T-cell (primary cell): ENCODE measurements at regions of chr15 and their contacts with region 1.

Region 1: DNA sequence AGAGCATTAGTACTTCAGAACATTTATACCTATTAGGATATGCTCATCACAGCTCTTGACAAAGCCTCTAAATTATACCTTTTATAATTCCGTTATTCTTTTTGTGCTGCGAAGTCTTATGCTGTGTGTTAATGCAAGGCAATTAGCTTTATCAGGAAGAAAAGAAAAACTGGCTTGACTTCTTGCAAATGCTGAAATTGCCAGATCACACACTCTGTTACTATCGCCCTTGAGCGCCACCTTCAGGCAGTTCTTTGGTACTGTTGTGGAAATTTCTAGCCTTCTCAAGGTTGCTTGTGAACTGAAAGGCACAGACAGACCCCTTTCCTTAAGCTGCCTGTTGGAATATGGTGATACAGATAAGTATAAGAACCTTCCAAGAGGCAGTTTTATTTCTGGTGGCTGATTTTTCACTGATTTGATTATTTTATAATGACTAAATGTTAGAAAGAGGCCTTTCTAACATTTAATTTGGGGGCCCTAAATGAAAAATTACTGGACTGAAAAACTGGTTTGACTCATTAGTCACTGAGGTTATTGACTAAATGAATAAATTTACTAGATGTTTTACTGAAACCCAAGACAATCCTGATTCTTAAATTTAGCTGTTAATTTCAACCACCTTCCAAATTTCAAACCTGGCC is 126.2 kb upstream of the RASGRP1 start:
- DNase-seq: peak; percentile 56 to 94 (median 75)
- ATAC-seq: peak; percentile 25 to 28 (median 27)
- H3K4me3 ChIP-seq: no peak overlapping the region
- H3K4me3 Mint-ChIP-seq: peak overlapping the region in 1 of 3 donors; percentile 48
- H3K27ac ChIP-seq: no peak overlapping the region
- H3K27ac Mint-ChIP-seq: peak overlapping the region; percentile 91 to 98
- H3K4me1 ChIP-seq: peaks cover 53 to 58% of the 10 kb centered on the region in 2 experiments
- H3K4me1 Mint-ChIP-seq: peaks cover 65 to 83% (median 75%) of the 10 kb centered on the region in 3 donors
- H3K27me3 ChIP-seq: no peaks in the 10 kb centered on the region
- H3K27me3 Mint-ChIP-seq: no peaks in the 10 kb centered on the region

Region 2: DNA sequence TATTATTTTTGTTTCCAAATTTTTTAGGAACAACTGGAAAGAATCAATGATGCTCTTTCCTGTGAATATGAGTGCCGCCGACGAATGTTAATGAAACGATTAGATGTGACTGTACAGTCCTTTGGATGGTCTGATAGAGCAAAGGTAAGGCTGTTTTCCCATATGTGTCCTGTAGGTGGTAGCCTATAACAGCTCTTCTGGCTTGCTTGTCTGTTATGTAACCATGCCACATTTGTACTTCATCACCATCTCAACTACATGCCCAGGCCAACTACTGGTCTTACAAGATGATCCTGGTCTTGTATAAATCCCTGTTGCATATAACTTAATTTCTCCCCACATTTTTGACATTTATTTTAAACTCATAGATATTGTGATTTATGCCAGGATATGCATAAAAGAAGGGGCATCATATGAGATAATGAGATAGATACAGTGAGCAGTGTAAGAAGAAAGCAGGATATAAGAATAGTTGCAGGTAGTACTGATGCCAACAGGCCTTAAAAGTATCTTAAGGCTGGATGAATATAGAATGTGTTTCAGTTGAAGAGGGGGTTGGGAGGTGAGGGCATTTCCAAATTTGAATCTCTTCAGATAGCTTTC is 216.6 kb before region 1 on chr15:
- CTCF ChIA-PET with region 1: interaction called, 8 to 17 read pairs
- POLR2A ChIA-PET with region 1: interaction called, 3 read pairs
- DNase-seq: peak in 28 of 35 experiments; percentile 3 to 84 (median 23)
- ATAC-seq: peak; percentile 96 to 99 (median 99)
- H3K4me3 ChIP-seq: no peak overlapping the region
- H3K4me3 Mint-ChIP-seq: no peak overlapping the region
- H3K27ac ChIP-seq: peak overlapping the region; percentile 8
- H3K27ac Mint-ChIP-seq: peak overlapping the region; percentile 79 to 84
- H3K4me1 ChIP-seq: peaks cover 0 to 2% of the 10 kb centered on the region in 2 experiments
- H3K4me1 Mint-ChIP-seq: peaks cover 7 to 19% (median 17%) of the 10 kb centered on the region in 3 donors
- H3K27me3 ChIP-seq: no peaks in the 10 kb centered on the region
- H3K27me3 Mint-ChIP-seq: no peaks in the 10 kb centered on the region

Region 3: DNA sequence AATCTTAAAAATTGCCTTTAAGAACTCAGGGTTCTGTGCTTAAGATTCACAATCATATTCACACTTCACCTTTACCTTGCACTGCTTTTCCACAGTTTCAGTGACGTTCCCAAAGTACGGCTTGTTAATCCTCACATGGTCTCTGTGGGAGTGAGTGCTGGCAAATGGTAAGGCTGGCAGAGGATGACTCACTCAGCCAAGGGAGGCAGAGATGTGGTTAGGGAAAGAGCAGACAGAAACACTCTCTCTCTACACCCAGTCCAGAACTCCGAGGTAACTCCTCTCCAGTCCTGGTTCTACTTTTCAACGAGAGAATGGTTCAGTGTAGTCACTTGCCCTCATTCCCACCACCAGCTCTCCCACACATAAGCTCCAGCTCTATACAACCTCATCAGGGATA is 159.3 kb before region 1 on chr15:
- CTCF ChIA-PET with region 1: interaction called in 1 of 2 experiments, 19 read pairs
- POLR2A ChIA-PET with region 1: no interaction called
- DNase-seq: no peak
- ATAC-seq: no peak
- H3K4me3 ChIP-seq: no peak overlapping the region
- H3K4me3 Mint-ChIP-seq: no peak overlapping the region
- H3K27ac ChIP-seq: no peak overlapping the region
- H3K27ac Mint-ChIP-seq: peak overlapping the region; percentile 91 to 97
- H3K4me1 ChIP-seq: peaks cover 55 to 62% of the 10 kb centered on the region in 2 experiments
- H3K4me1 Mint-ChIP-seq: peaks cover 95 to 98% (median 96%) of the 10 kb centered on the region in 3 donors
- H3K27me3 ChIP-seq: no peaks in the 10 kb centered on the region
- H3K27me3 Mint-ChIP-seq: no peaks in the 10 kb centered on the region

Region 4: GRCh38 chr15:38554354-38554753 is 136.5 kb before region 1 on chr15:
- CTCF ChIA-PET with region 1: interaction called, 96 to 249 read pairs
- POLR2A ChIA-PET with region 1: no interaction called
- DNase-seq: peak in 10 of 35 experiments; percentile 20 to 70 (median 28)
- ATAC-seq: peak; percentile 39 to 86 (median 60)
- H3K4me3 ChIP-seq: no peak overlapping the region
- H3K4me3 Mint-ChIP-seq: peak overlapping the region in 2 of 3 donors; percentile 32 to 87
- H3K27ac ChIP-seq: peak overlapping the region; percentile 31
- H3K27ac Mint-ChIP-seq: peak overlapping the region; percentile 94 to 98
- H3K4me1 ChIP-seq: peaks cover 72 to 75% of the 10 kb centered on the region in 2 experiments
- H3K4me1 Mint-ChIP-seq: peaks cover 90 to 92% (median 91%) of the 10 kb centered on the region in 3 donors
- H3K27me3 ChIP-seq: no peaks in the 10 kb centered on the region
- H3K27me3 Mint-ChIP-seq: no peaks in the 10 kb centered on the region

Region 5: GRCh38 chr15:38647683-38648082 is 43.1 kb before region 1 on chr15:
- CTCF ChIA-PET with region 1: interaction called, 12 to 90 read pairs
- POLR2A ChIA-PET with region 1: interaction called, 9 to 11 read pairs
- DNase-seq: no peak
- ATAC-seq: no peak
- H3K4me3 ChIP-seq: no peak overlapping the region
- H3K4me3 Mint-ChIP-seq: peak overlapping the region in 1 of 3 donors; percentile 41
- H3K27ac ChIP-seq: peak overlapping the region; percentile 43
- H3K27ac Mint-ChIP-seq: peak overlapping the region; percentile 98
- H3K4me1 ChIP-seq: peaks cover 50 to 63% of the 10 kb centered on the region in 2 experiments
- H3K4me1 Mint-ChIP-seq: peaks cover 75 to 84% (median 79%) of the 10 kb centered on the region in 3 donors
- H3K27me3 ChIP-seq: no peaks in the 10 kb centered on the region
- H3K27me3 Mint-ChIP-seq: no peaks in the 10 kb centered on the region

Region 6: DNA sequence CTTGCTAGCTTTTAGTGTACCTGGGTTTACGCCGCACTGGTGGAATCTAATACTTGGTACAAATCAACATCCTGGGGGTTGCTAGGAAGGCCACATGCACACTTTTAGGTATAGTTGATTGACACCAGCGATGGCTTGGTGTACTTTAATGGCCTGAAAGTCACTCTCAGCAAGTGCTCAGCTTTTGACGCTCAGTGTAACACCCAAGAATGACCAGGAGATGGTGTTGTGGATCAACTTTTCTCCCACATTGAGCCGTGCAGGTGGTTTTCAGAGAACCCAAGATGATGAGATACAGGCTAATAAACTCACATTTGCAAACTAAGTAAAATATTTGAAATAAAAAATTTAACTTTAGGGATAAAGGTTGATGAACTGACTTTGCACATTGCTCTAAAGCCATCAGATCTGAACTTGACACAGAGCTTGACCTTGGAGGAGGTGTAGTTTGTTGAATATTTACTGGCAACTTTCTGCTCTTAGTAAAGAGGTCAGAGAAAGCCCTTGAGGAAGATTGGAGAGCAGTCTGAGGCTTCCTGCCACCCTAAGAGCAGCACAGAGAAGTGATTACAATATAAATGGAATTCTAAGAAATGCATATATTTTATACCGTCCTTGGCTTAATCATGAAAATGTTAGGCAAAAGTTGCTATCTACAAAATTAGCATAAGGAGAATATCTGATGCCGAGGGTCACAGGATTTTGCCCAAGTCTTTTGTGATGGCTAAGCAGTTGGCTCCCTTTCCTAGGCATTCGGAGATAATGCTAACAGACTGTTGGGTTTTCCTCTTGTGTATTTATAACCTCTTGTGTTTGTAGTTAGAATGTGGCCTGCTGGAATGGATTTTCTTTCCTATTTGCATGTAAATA is 17.2 kb after region 1 on chr15:
- CTCF ChIA-PET with region 1: interaction called, 9 to 12 read pairs
- POLR2A ChIA-PET with region 1: interaction called in 1 of 2 experiments, 3 read pairs
- DNase-seq: peak in 10 of 35 experiments; percentile 10 to 74 (median 22)
- ATAC-seq: peak; percentile 85 to 91 (median 90)
- H3K4me3 ChIP-seq: no peak overlapping the region
- H3K4me3 Mint-ChIP-seq: no peak overlapping the region
- H3K27ac ChIP-seq: no peak overlapping the region
- H3K27ac Mint-ChIP-seq: no peak overlapping the region
- H3K4me1 ChIP-seq: no peaks in the 10 kb centered on the region
- H3K4me1 Mint-ChIP-seq: peaks cover 0 to 5% (median 0%) of the 10 kb centered on the region in 3 donors
- H3K27me3 ChIP-seq: no peaks in the 10 kb centered on the region
- H3K27me3 Mint-ChIP-seq: no peaks in the 10 kb centered on the region